Common myeloid progenitor, CD34-positive (primary cell): ENCODE measurements at regions of chr15 and their contacts with region 1.

Region 1: DNA sequence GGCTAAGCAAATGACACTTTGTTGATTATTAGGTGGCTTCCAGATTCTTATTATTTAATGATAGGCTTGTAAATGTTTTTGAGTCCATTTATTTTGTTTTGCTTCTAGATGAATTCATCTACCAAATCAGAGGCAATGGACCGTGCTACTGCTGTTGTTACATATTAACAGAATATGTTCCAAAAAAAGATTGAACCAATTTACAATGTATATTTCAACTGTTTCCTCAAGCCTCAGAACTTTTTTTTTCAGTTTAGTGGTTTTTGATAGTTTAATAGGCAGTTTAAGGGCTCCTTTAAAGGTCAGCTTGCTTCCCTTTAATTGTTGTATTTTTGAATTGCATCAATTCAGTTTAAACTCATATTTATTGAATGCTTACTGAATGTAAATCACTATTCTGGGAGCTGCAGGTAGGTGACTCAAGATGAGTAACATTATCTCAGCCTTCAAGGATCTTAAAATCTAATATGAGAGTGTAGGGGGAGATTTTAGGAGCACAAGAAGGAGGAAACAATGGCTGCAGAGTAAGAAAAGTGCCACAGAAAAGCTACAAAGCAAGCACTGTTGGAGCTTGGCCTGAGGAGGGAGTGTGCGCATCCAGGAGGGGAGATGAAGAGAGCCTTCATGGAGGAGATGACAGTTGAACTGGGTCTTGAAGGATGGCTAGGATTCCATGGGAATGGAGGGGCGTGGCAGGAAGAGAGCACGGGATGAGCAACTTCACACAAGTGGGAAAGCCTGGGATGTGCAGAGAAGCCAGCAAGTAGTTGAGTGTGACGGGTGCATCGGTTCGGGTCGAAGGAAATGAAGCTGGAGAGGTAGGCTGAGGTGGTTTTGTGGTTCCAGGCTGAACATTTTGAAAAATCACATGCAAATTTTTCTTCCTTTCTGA is 14.7 kb downstream of the MAP2K1 start:
- DNase-seq: peak in 2 of 3 donors; percentile 16 to 31
- H3K4me3 ChIP-seq: peak overlapping the region in 2 of 7 experiments; percentile 47 to 48
- H3K27ac ChIP-seq: no peak overlapping the region
- H3K4me1 ChIP-seq: peaks cover 18 to 66% (median 29%) of the 10 kb centered on the region in 4 experiments
- H3K27me3 ChIP-seq: no peaks in the 10 kb centered on the region

Region 2: GRCh38 chr15:66386204-66387123 is 14.9 kb before region 1 on chr15 and contains the start of gene MAP2K1:
- CTCF ChIA-PET with region 1: interaction called, 27 read pairs
- POLR2A ChIA-PET with region 1: interaction called, 6 read pairs
- DNase-seq: peak; percentile 97 to 98 (median 98)
- H3K4me3 ChIP-seq: peak within 1 kb of the TSS; percentile 59 to 90 (median 88)
- H3K27ac ChIP-seq: peak within 1 kb of the TSS; percentile 59 to 84
- H3K4me1 ChIP-seq: peaks cover 19 to 46% (median 31%) of the 10 kb centered on the region in 4 experiments
- H3K27me3 ChIP-seq: no peaks in the 10 kb centered on the region

Region 3: GRCh38 chr15:66424963-66425612 is 23.7 kb after region 1 on chr15:
- CTCF ChIA-PET with region 1: no interaction called
- POLR2A ChIA-PET with region 1: no interaction called
- DNase-seq: no peak
- H3K4me3 ChIP-seq: no peak overlapping the region
- H3K27ac ChIP-seq: no peak overlapping the region
- H3K4me1 ChIP-seq: peaks cover 0 to 18% (median 0%) of the 10 kb centered on the region in 4 experiments
- H3K27me3 ChIP-seq: no peaks in the 10 kb centered on the region